ENCODE measurements at regions of chr6 and their contacts with region 1.

Region 1: DNA sequence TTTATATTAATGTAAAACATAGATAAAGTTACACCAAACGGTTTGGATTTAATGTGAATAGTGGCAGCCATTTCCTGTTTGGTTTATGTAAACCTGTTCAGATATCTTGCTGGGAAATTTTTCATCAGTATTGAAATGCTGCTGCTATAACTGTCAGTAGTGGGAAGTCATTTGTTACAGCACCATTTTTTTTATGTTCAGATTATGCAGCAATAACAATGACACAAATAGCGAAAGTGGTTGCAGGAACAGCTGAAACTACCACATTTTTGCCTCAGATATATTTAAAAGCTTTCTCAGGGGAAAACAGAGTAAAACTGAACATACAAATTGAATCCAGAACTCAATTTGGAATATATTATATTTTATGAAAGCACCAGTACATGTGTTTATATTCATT is 128.8 kb upstream of the SIM1 start:
- DNase-seq: no peak

Region 2: GRCh38 chr6:100518579-100518978 is 74.9 kb before region 1 on chr6:
- intact Hi-C with region 1: loop called in 1 of 2 experiments (anchors 2 kb)
- DNase-seq: no peak

Region 3: DNA sequence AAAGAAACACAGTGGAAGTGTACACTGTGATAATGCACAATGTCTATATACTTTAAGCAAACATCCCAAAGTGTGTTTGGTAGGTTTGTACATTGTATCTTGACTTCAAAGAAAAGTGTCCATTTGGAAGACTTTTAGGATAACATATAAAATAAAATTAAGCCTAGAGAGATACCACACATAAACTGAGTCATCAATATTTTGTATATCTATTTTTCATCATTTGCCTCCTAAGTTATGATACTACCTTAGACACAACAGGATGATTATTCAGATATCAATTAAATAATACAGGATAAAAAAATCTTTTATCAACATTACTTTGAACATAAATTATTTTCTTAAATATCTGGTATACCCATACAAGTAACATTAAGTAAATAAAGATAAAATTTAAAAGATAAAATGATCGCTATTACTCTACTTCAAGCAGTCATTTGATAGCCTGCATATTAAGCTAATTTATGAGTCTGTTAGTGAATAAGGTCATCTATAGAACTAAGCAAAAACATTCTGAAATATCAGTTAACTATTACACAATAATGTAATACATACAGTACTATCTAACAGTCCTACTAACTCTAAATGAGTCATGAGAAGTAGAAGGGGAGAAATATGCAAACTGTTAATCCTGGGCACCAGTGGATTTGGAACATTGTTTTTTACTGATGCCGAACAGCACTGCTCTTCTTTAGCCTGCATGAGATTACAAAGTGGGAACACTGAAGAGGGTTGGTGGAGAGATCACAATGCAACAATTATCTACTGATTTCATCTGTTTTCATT is 29.6 kb after region 1 on chr6:
- intact Hi-C with region 1: no loop called
- DNase-seq: no peak